Ascending aorta (tissue), 2 donors: ENCODE measurements at regions of chr15 and their contacts with region 1.

Region 1: DNA sequence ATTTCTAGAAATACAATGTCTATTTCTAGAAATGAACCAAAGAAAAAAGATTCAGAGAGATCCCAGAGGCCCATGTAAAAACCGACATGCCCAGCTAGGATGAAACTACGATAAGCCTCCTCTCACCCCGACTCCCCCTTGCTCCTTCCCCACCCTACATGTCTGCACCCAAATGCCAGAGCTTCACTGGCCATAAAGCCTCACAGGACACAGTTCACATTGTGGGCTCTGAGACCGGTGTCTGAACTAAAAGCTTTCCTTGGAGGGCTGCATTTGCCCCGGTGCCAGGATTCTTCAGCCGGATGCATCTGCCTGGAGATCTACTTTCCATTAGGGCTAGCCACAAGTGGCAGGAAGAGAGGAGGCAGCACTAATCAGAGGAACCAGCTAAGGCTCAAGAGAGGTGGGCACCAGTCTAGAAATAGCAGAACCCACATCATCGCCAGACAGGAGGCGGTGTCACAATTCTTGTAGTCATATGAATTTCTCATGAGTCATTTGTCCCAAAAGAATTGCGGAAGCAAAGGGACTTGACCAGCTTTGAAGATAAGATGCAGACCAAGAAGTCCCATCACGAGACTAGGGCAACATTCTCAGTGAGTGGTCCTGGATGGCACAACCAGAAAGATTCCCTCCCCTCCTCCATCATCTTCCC is 353.6 kb downstream of the NTRK3 start:
- DNase-seq: peak; percentile 41 to 89
- H3K4me3 ChIP-seq: peak overlapping the region in 1 of 2 donors; percentile 40
- H3K27ac ChIP-seq: peak overlapping the region; percentile 82 to 88
- H3K4me1 ChIP-seq: peaks cover 0 to 6% of the 10 kb centered on the region in 2 donors
- H3K27me3 ChIP-seq: no peaks in the 10 kb centered on the region
- CTCF ChIP-seq: peak in 1 of 3 experiments; percentile 38

Region 2: DNA sequence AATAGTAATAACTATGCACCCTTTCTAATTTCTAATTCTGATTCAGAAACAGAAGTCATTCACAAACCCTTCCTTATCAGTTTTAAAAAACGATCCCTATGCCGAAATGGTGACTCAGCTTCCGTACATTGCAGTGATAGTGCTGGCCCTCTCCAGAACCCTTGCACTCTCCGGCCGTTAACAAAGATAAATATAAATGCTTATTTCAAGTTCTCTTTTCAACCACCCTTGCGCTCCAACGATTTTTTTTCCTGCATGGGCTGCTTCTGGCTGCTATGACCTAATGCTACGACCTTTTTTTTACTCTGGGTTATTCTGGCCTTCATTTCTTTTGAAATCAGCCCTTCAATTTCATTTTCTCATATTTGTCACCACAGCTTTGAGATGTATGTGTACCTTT is 292.5 kb before region 1 on chr15:
- intact Hi-C with region 1: loop called (anchors 5 kb)
- DNase-seq: peak in 1 of 2 donors; percentile 66
- H3K4me3 ChIP-seq: no peak overlapping the region
- H3K27ac ChIP-seq: peak overlapping the region; percentile 65 to 76
- H3K4me1 ChIP-seq: peaks cover 7 to 23% of the 10 kb centered on the region in 2 donors
- H3K27me3 ChIP-seq: no peaks in the 10 kb centered on the region
- CTCF ChIP-seq: no peak

Region 3: DNA sequence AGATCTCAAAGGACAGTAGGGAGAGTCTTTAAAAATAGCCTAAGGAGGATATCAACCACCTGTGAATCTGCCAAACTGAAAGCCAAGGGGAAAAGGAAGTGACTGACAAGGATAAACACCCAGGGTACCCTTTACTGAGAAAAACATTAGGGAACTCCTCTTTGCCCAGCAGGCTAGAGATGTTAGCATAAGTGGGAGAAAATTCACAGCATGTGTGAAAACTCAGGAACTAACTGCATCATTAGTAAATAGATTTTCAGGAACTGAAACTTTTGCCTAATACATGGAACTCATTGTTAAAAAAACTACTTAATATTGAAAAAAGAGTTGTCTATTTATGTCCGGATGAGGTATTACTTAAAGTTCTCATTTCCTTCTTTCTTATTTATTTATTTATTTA is 21.9 kb before region 1 on chr15:
- intact Hi-C with region 1: no loop called
- DNase-seq: no peak
- H3K4me3 ChIP-seq: no peak overlapping the region
- H3K27ac ChIP-seq: no peak overlapping the region
- H3K4me1 ChIP-seq: no peaks in the 10 kb centered on the region
- H3K27me3 ChIP-seq: no peaks in the 10 kb centered on the region
- CTCF ChIP-seq: no peak

Region 4: DNA sequence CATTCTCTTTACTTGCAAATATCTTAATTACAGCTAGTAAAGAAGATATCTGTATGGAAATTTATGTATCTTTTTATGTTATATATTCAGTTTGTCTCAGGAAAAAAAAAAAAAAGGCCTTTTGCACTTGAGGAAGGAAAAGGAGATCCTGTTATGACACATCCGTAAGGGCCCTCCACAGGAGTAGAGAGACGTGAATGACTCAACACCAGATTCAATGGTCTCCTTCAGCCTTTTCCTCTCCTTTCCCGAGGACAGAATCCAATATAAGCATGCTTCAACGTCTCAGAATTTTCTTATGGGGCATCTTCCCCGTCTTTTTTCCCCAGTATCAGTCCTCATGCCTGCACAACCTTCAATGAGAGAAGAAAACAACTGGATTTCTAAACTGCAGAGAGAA is 13.3 kb after region 1 on chr15:
- intact Hi-C with region 1: no loop called
- DNase-seq: no peak
- H3K4me3 ChIP-seq: no peak overlapping the region
- H3K27ac ChIP-seq: no peak overlapping the region
- H3K4me1 ChIP-seq: no peaks in the 10 kb centered on the region
- H3K27me3 ChIP-seq: no peaks in the 10 kb centered on the region
- CTCF ChIP-seq: no peak

Region 5: DNA sequence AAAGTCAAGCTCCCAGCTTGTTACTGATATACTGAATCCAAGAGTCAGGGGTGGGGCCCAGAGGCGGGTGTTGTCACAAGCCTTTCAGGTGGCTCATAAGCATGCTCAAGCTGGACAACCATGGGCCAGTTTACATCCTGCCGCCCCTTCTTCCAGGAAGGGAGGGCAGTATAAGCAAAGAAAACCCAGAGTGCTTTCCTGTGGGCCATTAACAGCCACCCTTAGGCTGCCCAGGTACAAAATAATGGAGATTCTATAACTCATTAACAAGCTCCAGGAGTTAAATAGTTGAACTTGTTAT is 170.4 kb after region 1 on chr15:
- intact Hi-C with region 1: loop called (anchors 5 kb)
- DNase-seq: no peak
- H3K4me3 ChIP-seq: no peak overlapping the region
- H3K27ac ChIP-seq: peak overlapping the region; percentile 75 to 79
- H3K4me1 ChIP-seq: peaks cover 15 to 26% of the 10 kb centered on the region in 2 donors
- H3K27me3 ChIP-seq: no peaks in the 10 kb centered on the region
- CTCF ChIP-seq: no peak